MCF 10A (cell line): ENCODE measurements at regions of chr2 and their contacts with region 1.

Region 1: DNA sequence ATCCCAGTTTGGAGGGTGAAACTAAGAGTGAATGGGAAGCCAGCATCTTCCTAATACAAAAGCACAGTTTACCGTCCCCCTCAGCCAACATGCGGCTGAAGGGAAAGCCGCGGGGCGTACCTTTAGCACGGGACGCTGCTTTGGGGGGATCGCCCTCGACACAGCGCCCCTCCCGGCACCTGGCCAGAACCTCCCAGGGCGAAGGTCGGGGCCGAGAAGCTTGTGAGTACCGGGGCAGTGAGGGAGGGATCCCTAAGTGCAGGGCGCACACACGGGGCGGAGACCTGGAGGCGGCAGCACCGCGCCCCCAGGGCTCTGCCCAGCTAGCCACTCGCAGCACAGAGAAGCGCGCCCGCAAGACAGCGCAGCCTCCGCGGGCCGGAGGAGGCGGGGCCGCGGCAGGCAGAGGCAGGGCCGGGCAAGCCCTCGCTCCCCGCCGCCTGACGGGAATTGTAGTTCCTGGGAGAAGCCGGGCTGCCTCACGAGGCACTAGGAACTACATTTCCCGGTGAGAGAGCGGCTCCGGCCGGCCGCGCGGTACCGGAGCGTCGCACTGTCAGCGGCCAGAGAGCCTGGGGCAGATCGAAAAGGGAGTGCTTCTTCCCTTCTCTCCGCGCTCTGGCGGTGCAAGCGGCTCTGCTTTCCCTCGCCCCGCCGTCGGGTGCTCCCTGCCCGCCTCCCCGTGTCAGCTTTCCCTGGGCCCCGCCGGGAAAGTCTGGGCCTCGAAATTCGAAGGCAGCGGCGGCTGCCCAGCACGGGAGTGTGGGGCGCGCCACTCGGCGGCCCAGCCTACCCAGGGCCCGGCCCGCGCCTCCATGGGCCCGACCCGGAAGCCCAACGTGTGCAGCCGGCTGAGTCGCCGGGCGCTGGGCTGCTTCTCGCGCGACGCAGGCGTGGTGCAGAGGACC is at the starts of genes DCAF17 and METTL8:
- DNase-seq: peak; percentile 97
- H3K4me3 Mint-ChIP-seq: peak within 1 kb of the TSS; percentile 98
- H3K27ac Mint-ChIP-seq: peak within 1 kb of the TSS; percentile 93
- H3K4me1 Mint-ChIP-seq: peaks cover 17% of the 10 kb centered on the region
- H3K27me3 Mint-ChIP-seq: no peaks in the 10 kb centered on the region
- CTCF ChIP-seq: peak; percentile 10
- total RNA-seq, gene DCAF17: 20.8 and 21.3 TPM in 2 replicates
- total RNA-seq, gene METTL8: 28.4 and 55.1 TPM in 2 replicates

Region 2: DNA sequence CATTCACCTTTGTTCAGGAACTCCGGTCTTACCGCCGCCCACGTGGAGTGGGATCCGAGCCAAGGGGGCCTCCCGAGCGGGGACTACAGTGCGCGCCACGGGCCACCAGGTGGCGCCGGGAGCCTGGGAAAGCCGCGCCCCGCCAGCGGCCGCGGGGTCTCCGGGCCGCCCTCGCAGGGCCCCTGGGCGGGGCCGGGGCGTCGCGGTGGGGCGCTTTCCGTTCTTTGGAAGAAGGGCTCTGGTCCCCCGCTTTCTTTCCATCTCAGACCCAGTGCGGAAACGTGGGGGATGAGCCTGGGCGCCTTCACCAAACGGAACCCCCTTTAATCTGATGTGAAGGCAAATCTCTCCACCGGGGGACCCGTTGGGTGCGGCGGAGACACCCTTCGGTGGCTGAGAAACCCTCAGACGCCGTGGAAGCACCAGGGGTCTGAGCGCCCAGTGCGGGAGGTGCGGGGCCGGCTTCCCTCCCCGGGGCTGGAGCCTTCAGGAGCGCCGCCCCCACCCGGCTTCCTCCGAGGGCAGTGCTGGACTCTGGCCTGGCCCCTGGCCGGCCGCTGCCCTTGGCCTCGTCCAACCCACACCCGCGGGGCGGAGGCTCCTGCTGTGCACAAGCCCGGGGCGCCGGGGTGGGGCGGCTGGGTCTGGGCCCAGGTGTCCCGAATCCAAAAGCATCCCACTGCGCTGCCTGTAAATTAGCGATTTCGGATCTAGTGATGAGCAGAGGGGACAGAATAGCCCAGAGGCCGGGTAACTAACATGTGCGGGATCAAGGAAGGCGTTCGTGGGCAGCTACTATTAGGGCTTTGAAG is 460.3 kb before region 1 on chr2:
- CTCF ChIA-PET with region 1: interaction called, 4 read pairs
- POLR2A ChIA-PET with region 1: interaction called, 4 read pairs
- intact Hi-C with region 1: loop called (anchors 2 kb)
- DNase-seq: peak; percentile 86
- H3K4me3 Mint-ChIP-seq: peak overlapping the region; percentile 71
- H3K27ac Mint-ChIP-seq: peak overlapping the region; percentile 19
- H3K4me1 Mint-ChIP-seq: no peaks in the 10 kb centered on the region
- H3K27me3 Mint-ChIP-seq: no peaks in the 10 kb centered on the region
- CTCF ChIP-seq: peak; percentile 97